Aorta (tissue), 5 donors: ENCODE measurements at regions of chr4 and their contacts with region 1.

Region 1: GRCh38 chr4:87848622-87849351 is 16.0 kb downstream of the MEPE start:
- DNase-seq: peak in 1 of 2 donors; percentile 56
- ATAC-seq: peak; percentile 85
- H3K4me3 ChIP-seq: peak overlapping the region; percentile 8 to 47
- H3K27ac ChIP-seq: no peak overlapping the region
- H3K4me1 ChIP-seq: peaks cover 0 to 1% of the 10 kb centered on the region in 2 donors
- H3K27me3 ChIP-seq: no peaks in the 10 kb centered on the region

Region 2: DNA sequence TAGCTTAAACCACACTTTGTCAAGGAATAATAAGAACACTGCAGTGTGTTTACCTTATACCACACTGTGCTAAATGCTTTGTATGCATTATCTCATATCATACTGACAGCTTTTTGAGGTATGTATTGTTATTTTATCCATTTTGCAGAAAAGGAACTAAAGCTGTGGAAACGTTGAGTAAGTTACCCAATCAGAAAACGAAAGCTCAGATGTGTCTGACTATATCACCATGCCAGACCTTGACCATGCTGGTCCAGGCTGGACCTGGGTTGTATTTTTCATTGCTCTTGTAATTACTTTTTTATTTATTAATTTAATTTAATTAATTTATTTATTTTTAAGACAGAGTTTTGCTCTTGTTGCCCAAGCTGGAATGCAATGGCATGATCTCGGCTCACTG is 459.9 kb before region 1 on chr4:
- intact Hi-C with region 1: loop called in 1 of 2 experiments (anchors 10 kb)
- DNase-seq: no peak
- ATAC-seq: no peak
- H3K4me3 ChIP-seq: no peak overlapping the region
- H3K27ac ChIP-seq: no peak overlapping the region
- H3K4me1 ChIP-seq: no peaks in the 10 kb centered on the region
- H3K27me3 ChIP-seq: no peaks in the 10 kb centered on the region

Region 3: GRCh38 chr4:87476934-87477333 is 371.9 kb before region 1 on chr4:
- intact Hi-C with region 1: loop called in 1 of 2 experiments (anchors 10 kb)
- DNase-seq: no peak
- ATAC-seq: no peak
- H3K4me3 ChIP-seq: no peak overlapping the region
- H3K27ac ChIP-seq: no peak overlapping the region
- H3K4me1 ChIP-seq: no peaks in the 10 kb centered on the region
- H3K27me3 ChIP-seq: no peaks in the 10 kb centered on the region

Region 4: GRCh38 chr4:87973283-87974169 is 124.7 kb after region 1 on chr4:
- intact Hi-C with region 1: loop called in 1 of 2 experiments (anchors 2 kb)
- DNase-seq: peak in 1 of 2 donors; percentile 65
- ATAC-seq: no peak
- H3K4me3 ChIP-seq: no peak overlapping the region
- H3K27ac ChIP-seq: no peak overlapping the region
- H3K4me1 ChIP-seq: no peaks in the 10 kb centered on the region
- H3K27me3 ChIP-seq: peaks cover 0 to 2% of the 10 kb centered on the region in 2 donors